Naive thymus-derived CD8-positive, alpha-beta T cell (primary cell): ENCODE measurements at regions of chr15 and their contacts with region 1.

Region 1: GRCh38 chr15:99476413-99477222 is 89.2 kb upstream of the MEF2A start:
- DNase-seq: peak; percentile 16 to 71 (median 44)
- ATAC-seq: peak; percentile 75 to 81
- H3K4me3 Mint-ChIP-seq: peak overlapping the region; percentile 13 to 74 (median 56)
- H3K27ac Mint-ChIP-seq: peak overlapping the region in 7 of 10 donors; percentile 55 to 84 (median 63)
- H3K4me1 Mint-ChIP-seq: peaks cover 24 to 80% (median 61%) of the 10 kb centered on the region in 4 donors
- H3K27me3 Mint-ChIP-seq: no peaks in the 10 kb centered on the region

Region 2: DNA sequence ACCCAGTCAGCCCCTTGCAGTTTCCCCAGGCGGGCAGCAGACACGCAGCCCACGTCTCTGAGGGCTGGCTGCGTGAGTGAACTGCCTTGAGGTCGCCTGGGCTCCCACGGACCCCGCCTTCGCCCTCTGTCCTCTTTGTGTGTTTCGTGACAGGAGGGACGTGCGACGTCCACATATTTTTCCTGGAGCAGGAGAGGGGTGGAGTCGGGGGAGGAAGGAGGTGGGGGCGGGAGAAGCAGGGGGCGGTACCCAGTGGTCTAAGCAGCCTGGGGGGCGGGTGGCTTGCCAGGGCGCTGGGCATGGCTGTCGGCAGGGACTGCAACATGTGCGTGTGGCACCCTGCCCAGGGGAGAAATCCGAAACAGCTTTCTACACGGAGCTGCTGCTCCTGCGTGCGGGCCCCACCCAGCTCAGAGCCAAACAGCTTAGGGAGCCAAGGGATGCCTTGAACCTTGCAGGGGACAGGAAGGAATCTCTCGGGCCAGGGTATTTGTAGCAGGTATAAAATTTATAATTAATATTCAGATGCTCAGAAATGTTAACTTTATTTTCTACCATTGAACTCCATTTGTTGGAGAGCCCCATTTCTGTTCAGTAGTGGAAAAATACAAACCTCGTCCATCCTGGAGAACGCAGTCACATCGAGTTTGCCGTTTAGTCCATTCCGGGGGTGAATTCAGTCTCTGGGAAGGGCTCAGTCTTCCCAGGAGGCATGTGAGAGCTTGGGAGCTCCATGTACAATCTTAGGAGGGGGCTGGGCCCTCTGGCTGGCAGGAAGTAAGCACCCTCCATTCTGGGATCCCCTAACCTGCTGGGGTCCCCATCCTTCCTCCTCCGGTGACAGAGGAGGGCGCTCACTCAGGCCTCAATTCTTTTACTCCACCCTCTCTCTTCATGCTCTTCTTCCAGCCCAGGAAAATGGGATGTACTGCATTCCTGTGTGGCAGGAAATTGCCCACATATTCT is 10.0 kb after region 1 on chr15:
- POLR2A ChIA-PET with region 1: interaction called, 10 read pairs
- DNase-seq: peak in 2 of 10 donors; percentile 12 to 23
- ATAC-seq: peak; percentile 65 to 75
- H3K4me3 Mint-ChIP-seq: peak overlapping the region; percentile 72 to 89 (median 80)
- H3K27ac Mint-ChIP-seq: peak overlapping the region in 9 of 10 donors; percentile 5 to 90 (median 81)
- H3K4me1 Mint-ChIP-seq: peaks cover 19 to 33% (median 26%) of the 10 kb centered on the region in 4 donors
- H3K27me3 Mint-ChIP-seq: peaks cover 0 to 4% (median 0%) of the 10 kb centered on the region in 5 donors